CD4-positive, alpha-beta T cell (primary cell): ENCODE measurements at regions of chr5 and their contacts with region 1.

Region 1: GRCh38 chr5:177403792-177404640 is 3.6 kb upstream of the PFN3 start:
- DNase-seq: peak; percentile 76 to 95 (median 84)
- ATAC-seq: peak; percentile 73
- H3K4me3 ChIP-seq: peak overlapping the region; percentile 59
- H3K4me3 Mint-ChIP-seq: peak overlapping the region; percentile 87
- H3K27ac ChIP-seq: no peak overlapping the region
- H3K27ac Mint-ChIP-seq: no peak overlapping the region
- H3K4me1 ChIP-seq: peaks cover 41% of the 10 kb centered on the region
- H3K4me1 Mint-ChIP-seq: peaks cover 26% of the 10 kb centered on the region
- H3K27me3 ChIP-seq: peaks cover 0 to 2% of the 10 kb centered on the region in 2 experiments
- H3K27me3 Mint-ChIP-seq: no peaks in the 10 kb centered on the region
- CTCF ChIP-seq: peak; percentile 74

Region 2: GRCh38 chr5:177271113-177271512 is 132.9 kb before region 1 on chr5:
- CTCF ChIA-PET with region 1: no interaction called
- POLR2A ChIA-PET with region 1: no interaction called
- intact Hi-C with region 1: no loop called
- DNase-seq: no peak
- ATAC-seq: no peak
- H3K4me3 ChIP-seq: no peak overlapping the region
- H3K4me3 Mint-ChIP-seq: no peak overlapping the region
- H3K27ac ChIP-seq: no peak overlapping the region
- H3K27ac Mint-ChIP-seq: no peak overlapping the region
- H3K4me1 ChIP-seq: no peaks in the 10 kb centered on the region
- H3K4me1 Mint-ChIP-seq: no peaks in the 10 kb centered on the region
- H3K27me3 ChIP-seq: no peaks in the 10 kb centered on the region
- H3K27me3 Mint-ChIP-seq: no peaks in the 10 kb centered on the region
- CTCF ChIP-seq: no peak

Region 3: DNA sequence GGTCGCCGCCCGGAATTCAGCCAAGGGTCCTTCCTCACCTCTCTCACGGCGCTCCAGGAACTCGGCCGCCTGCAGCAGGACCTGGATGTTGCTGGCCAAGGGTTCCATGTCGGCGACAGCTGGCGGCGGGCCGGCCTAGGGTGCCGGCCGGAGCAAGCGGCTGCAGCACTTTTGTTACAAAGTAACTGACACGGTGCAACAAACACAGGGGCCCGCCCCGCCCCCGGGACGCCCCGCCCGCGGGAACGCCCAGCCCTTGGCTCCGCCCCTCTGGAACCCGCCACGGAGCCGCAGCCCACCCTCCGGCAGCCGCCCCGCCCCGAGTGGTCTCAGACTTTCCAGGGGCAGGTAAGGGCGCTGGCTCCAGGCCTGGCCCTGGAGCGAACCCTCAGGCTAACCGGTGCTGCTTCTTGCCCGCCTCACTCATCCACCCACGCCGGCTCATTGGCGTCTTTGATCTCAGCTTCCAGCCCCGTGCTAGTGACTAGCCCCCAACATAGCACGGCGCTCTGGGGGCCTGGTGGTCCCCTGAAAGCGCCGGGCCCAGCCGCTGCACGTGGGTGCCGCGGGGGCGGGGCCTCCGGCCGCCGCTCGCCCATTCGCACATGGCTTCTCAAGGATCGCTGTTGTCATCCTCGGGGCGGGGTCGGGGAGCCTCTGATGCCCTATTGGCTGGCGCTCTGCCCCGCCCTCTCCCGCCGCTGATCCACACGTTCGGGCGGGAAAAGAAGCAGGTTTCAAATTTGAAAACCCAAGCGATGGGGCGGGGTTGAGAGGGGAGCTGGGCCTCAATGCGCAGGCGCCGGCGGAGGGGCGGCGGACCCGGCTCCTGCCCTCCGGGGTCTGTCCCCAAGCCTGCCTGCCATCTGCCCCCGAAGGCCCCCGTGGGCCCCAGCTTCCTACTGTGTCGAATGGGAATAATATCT is 92.0 kb before region 1 on chr5 and contains the start of gene MXD3:
- CTCF ChIA-PET with region 1: interaction called, 13 read pairs
- POLR2A ChIA-PET with region 1: interaction called, 12 read pairs
- intact Hi-C with region 1: no loop called
- DNase-seq: peak; percentile 87 to 96 (median 94)
- ATAC-seq: peak; percentile 93
- H3K4me3 ChIP-seq: peak within 1 kb of the TSS; percentile 69
- H3K4me3 Mint-ChIP-seq: peak within 1 kb of the TSS; percentile 83
- H3K27ac ChIP-seq: peak within 1 kb of the TSS in 1 of 2 donors; percentile 3
- H3K27ac Mint-ChIP-seq: no peak within 1 kb of the TSS
- H3K4me1 ChIP-seq: peaks cover 59% of the 10 kb centered on the region
- H3K4me1 Mint-ChIP-seq: peaks cover 40% of the 10 kb centered on the region
- H3K27me3 ChIP-seq: peaks cover 0 to 3% of the 10 kb centered on the region in 2 experiments
- H3K27me3 Mint-ChIP-seq: peaks cover 6% of the 10 kb centered on the region
- CTCF ChIP-seq: no peak
- total RNA-seq, gene MXD3: 5.8 to 7.5 TPM

Region 4: DNA sequence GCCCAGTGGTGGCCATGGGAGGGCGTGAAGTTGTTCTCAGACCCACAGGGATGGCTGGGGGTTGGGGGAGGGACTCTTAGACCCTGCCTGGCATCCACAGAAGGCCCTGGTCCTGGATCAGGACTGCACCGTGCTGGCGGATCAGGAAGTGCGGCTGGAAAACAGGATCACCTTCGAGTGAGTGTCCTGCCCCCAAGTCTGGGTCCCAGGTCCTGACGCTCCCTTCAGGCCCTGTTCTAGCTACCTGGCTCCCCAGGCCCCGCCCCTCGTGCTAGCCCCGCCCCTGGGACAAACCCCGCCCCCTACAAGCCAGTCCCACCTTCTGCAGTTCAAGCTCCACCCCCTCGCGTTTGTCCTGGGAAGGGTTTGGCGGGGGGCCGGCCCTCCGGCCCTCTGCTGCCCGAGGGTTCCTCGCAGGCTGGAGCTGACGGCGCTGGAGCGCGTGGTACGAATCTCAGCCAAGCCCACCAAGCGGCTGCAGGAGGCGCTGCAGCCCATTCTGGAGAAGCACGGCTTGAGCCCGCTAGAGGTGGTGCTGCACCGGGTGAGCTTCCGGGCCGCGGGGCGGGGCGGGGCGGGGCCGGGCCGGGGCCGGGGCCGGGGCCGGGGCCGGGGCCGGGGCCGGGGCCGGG is 33.4 kb before region 1 on chr5:
- CTCF ChIA-PET with region 1: interaction called, 47 read pairs
- POLR2A ChIA-PET with region 1: interaction called, 12 read pairs
- intact Hi-C with region 1: loop called in 1 of 2 experiments (anchors 2 kb)
- DNase-seq: peak in 12 of 14 experiments; percentile 29 to 90 (median 62)
- ATAC-seq: peak; percentile 74
- H3K4me3 ChIP-seq: peak overlapping the region; percentile 48
- H3K4me3 Mint-ChIP-seq: peak overlapping the region; percentile 42
- H3K27ac ChIP-seq: peak overlapping the region; percentile 23 to 27
- H3K27ac Mint-ChIP-seq: peak overlapping the region; percentile 33
- H3K4me1 ChIP-seq: peaks cover 82% of the 10 kb centered on the region
- H3K4me1 Mint-ChIP-seq: peaks cover 67% of the 10 kb centered on the region
- H3K27me3 ChIP-seq: no peaks in the 10 kb centered on the region
- H3K27me3 Mint-ChIP-seq: no peaks in the 10 kb centered on the region
- CTCF ChIP-seq: no peak

Region 5: DNA sequence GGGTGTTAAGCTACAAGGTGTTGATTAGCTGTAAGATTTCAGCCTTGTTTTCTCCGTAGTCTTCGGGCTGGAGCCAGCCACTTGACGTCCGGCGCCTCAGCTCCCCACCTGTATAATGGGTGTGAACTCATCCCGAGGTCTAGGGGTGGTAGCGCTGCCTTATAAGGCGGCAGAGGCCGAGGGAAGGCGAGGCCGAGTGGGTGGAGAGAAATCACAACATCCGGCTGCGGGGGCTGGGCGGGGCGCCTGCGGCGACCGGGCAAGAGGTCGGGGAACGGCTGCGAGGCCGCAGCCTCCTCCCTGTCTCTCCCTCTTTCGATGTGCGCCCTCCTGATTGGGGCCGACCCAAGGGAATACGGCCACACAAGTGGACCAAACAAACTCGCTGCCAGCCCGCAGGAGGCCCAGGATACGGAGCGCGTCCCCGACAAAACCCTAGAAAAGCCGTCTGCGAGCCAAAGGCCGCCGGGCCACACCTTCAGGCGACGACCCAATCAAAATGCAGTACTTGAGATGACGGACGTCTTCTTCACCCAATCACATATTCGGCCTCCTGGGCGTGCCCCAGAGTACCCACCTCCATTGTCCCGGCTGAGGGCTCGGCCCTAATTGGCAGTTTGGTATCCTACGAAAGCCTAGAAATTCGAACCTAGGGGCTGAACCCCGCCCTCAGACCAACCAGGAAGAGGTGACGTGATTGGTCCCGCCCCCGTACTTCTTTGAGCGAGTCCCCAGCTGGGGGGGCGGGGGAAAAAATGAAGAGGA is 22.0 kb after region 1 on chr5:
- CTCF ChIA-PET with region 1: interaction called, 68 read pairs
- POLR2A ChIA-PET with region 1: interaction called, 250 read pairs
- intact Hi-C with region 1: loop called (anchors 1 to 2 kb)
- DNase-seq: peak; percentile 98 to 100 (median 100)
- ATAC-seq: peak; percentile 79
- H3K4me3 ChIP-seq: peak overlapping the region; percentile 52
- H3K4me3 Mint-ChIP-seq: peak overlapping the region; percentile 97
- H3K27ac ChIP-seq: peak overlapping the region; percentile 77 to 83
- H3K27ac Mint-ChIP-seq: peak overlapping the region; percentile 96
- H3K4me1 ChIP-seq: peaks cover 63% of the 10 kb centered on the region
- H3K4me1 Mint-ChIP-seq: peaks cover 42% of the 10 kb centered on the region
- H3K27me3 ChIP-seq: no peaks in the 10 kb centered on the region
- H3K27me3 Mint-ChIP-seq: no peaks in the 10 kb centered on the region
- CTCF ChIP-seq: no peak

Region 6: GRCh38 chr5:177440211-177440971 is 36.4 kb after region 1 on chr5:
- CTCF ChIA-PET with region 1: interaction called, 352 read pairs
- POLR2A ChIA-PET with region 1: interaction called, 435 read pairs
- intact Hi-C with region 1: loop called in 1 of 2 experiments (anchors 2 kb)
- DNase-seq: peak in 7 of 14 experiments; percentile 35 to 91 (median 56)
- ATAC-seq: peak; percentile 65
- H3K4me3 ChIP-seq: no peak overlapping the region
- H3K4me3 Mint-ChIP-seq: peak overlapping the region; percentile 44
- H3K27ac ChIP-seq: peak overlapping the region; percentile 78 to 87
- H3K27ac Mint-ChIP-seq: peak overlapping the region; percentile 88
- H3K4me1 ChIP-seq: peaks cover 98% of the 10 kb centered on the region
- H3K4me1 Mint-ChIP-seq: peaks cover 67% of the 10 kb centered on the region
- H3K27me3 ChIP-seq: no peaks in the 10 kb centered on the region
- H3K27me3 Mint-ChIP-seq: no peaks in the 10 kb centered on the region
- CTCF ChIP-seq: no peak

Region 7: GRCh38 chr5:177454397-177455035 is 50.5 kb after region 1 on chr5:
- CTCF ChIA-PET with region 1: interaction called, 352 read pairs
- POLR2A ChIA-PET with region 1: interaction called, 435 read pairs
- intact Hi-C with region 1: loop called (anchors 1 kb)
- DNase-seq: peak; percentile 87 to 97 (median 94)
- ATAC-seq: peak; percentile 45
- H3K4me3 ChIP-seq: peak overlapping the region; percentile 71
- H3K4me3 Mint-ChIP-seq: peak overlapping the region; percentile 89
- H3K27ac ChIP-seq: peak overlapping the region; percentile 90 to 95
- H3K27ac Mint-ChIP-seq: peak overlapping the region; percentile 93
- H3K4me1 ChIP-seq: peaks cover 52% of the 10 kb centered on the region
- H3K4me1 Mint-ChIP-seq: peaks cover 43% of the 10 kb centered on the region
- H3K27me3 ChIP-seq: no peaks in the 10 kb centered on the region
- H3K27me3 Mint-ChIP-seq: no peaks in the 10 kb centered on the region
- CTCF ChIP-seq: peak; percentile 79